ENCODE measurements at regions of chr1 and their contacts with region 1.

Region 1: DNA sequence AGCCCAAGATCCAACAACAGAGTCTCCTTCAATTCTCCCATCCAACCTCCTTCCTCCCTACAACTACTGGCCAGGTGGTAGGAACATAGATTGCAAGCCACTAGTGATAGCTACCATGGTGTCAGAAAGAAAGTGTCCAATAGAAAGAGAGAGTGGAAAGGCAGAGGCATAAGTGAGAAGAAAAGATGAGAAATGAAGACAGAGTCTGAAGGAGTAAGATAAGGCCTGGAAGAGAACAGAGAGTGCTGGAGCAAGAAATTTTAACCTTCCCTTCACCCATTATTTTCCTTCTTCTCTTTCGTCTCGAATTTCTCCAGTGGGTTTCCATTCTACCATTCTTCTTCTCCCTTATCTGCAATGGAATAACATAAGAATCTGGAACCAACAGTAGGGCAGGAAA is 57.9 kb downstream of the CDC42BPA start:
- DNase-seq: no peak
- ATAC-seq: no peak

Region 2: GRCh38 chr1:227299241-227299627 is 38.8 kb after region 1 on chr1:
- intact Hi-C with region 1: loop called (anchors 5 kb)
- DNase-seq: no peak
- ATAC-seq: no peak